Activated CD4-positive, alpha-beta memory T cell treated with anti-CD3 and anti-CD28 coated beads for 36 hours (primary cell): ENCODE measurements at regions of chr6 and their contacts with region 1.

Region 1: GRCh38 chr6:148144917-148145521 is 197.6 kb upstream of the SASH1 start:
- DNase-seq: peak; percentile 78
- H3K4me3 Mint-ChIP-seq: no peak overlapping the region
- H3K27ac Mint-ChIP-seq: no peak overlapping the region
- H3K4me1 Mint-ChIP-seq: peaks cover 15% of the 10 kb centered on the region
- H3K27me3 Mint-ChIP-seq: peaks cover 5% of the 10 kb centered on the region

Region 2: DNA sequence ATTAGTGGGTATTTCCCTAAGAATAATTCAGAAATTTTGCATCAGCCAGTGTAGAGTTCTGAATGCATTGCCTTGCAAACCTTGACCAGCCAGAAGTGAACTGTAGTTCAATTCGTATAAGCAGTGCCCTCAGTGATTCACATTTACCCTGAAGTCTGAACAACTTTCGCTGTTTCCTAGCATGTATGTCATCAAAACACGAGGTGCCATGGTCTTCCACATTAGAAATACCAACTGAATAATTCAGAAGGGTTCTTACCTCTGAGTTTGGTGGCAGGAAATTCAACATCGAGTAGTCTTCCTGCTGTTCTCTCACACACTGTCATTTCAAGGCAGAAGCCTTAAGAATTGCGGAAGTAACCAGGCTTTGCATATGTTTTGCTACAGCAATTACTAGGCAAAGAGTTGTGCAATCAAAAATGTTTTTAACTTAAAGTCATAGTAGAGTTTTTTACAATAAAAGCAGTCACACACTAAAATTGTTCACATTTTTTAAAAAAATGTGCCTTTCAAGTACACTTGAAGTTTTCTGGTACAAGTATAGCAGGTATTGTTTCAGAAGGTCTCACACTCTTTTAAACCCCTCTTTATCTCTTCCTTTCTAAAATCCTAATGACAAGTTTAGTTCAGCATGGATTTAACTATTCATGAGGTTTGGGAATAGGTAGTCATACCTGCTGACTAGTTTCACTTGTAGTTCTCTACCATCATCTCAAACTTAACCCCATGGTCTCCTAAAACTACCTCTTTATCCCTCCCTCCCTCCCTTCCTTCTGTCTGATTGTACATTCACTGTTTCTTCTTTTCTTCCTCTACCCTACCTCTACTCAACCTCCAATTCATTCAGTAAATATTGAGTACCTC is 822.5 kb before region 1 on chr6:
- CTCF ChIA-PET with region 1: no interaction called
- POLR2A ChIA-PET with region 1: no interaction called
- intact Hi-C with region 1: loop called (anchors 1 kb)
- DNase-seq: peak; percentile 25
- H3K4me3 Mint-ChIP-seq: peak overlapping the region; percentile 28
- H3K27ac Mint-ChIP-seq: peak overlapping the region; percentile 90
- H3K4me1 Mint-ChIP-seq: peaks cover 17% of the 10 kb centered on the region
- H3K27me3 Mint-ChIP-seq: no peaks in the 10 kb centered on the region

Region 3: GRCh38 chr6:148112851-148113319 is 32.1 kb before region 1 on chr6:
- CTCF ChIA-PET with region 1: interaction called, 4 read pairs
- POLR2A ChIA-PET with region 1: no interaction called
- intact Hi-C with region 1: loop called (anchors 1 kb)
- DNase-seq: no peak
- H3K4me3 Mint-ChIP-seq: no peak overlapping the region
- H3K27ac Mint-ChIP-seq: no peak overlapping the region
- H3K4me1 Mint-ChIP-seq: no peaks in the 10 kb centered on the region
- H3K27me3 Mint-ChIP-seq: peaks cover 2% of the 10 kb centered on the region

Region 4: GRCh38 chr6:148203970-148204369 is 59.0 kb after region 1 on chr6:
- CTCF ChIA-PET with region 1: no interaction called
- POLR2A ChIA-PET with region 1: no interaction called
- intact Hi-C with region 1: loop called (anchors 1 kb)
- DNase-seq: peak; percentile 80
- H3K4me3 Mint-ChIP-seq: peak overlapping the region; percentile 55
- H3K27ac Mint-ChIP-seq: peak overlapping the region; percentile 72
- H3K4me1 Mint-ChIP-seq: peaks cover 35% of the 10 kb centered on the region
- H3K27me3 Mint-ChIP-seq: peaks cover 69% of the 10 kb centered on the region

Region 5: DNA sequence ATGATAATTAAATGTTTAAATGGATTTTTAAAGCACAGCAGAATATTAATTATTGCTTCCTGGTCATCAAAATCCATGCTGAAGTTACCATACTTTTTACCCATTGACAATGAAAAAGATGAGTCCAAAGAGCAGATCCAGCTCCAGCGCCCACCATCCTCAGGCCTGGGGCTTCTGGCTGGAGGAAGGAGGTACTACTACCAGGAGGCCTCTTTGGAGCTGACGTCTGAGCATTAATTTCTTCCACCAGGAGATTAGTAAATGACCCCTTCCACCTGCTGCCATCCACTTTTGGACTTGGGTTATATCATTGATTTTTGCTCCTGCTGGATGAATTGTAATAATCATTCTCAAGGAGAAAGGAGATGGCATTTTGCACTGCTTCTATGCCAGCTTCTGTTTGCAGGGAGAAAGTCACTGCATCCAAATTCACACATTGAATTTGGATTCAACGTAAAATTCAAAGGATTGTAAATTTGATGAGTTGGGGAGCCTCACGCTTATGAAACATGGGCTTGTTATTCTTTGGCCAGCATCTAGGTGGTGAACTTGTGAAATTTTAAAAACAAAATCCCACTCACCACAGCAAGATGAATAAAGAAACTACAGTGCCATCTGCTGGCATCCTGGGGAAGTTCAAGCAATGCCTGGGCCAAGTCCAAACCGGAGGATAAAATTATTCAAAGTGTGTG is 319.4 kb after region 1 on chr6:
- CTCF ChIA-PET with region 1: interaction called, 3 read pairs
- POLR2A ChIA-PET with region 1: no interaction called
- intact Hi-C with region 1: loop called (anchors 10 kb)
- DNase-seq: peak; percentile 67
- H3K4me3 Mint-ChIP-seq: no peak overlapping the region
- H3K27ac Mint-ChIP-seq: no peak overlapping the region
- H3K4me1 Mint-ChIP-seq: no peaks in the 10 kb centered on the region
- H3K27me3 Mint-ChIP-seq: peaks cover 10% of the 10 kb centered on the region